ENCODE measurements at regions of chr12 and their contacts with region 1.

Region 1: GRCh38 chr12:53321074-53321814 is at the start of gene AAAS:
- DNase-seq: peak; percentile 98

Region 2: GRCh38 chr12:53180220-53180930 is 140.9 kb before region 1 on chr12 and contains the starts of genes CSAD and ZNF740:
- CTCF ChIA-PET with region 1: interaction called, 4 read pairs
- POLR2A ChIA-PET with region 1: interaction called, 10 read pairs
- DNase-seq: peak; percentile 98

Region 3: DNA sequence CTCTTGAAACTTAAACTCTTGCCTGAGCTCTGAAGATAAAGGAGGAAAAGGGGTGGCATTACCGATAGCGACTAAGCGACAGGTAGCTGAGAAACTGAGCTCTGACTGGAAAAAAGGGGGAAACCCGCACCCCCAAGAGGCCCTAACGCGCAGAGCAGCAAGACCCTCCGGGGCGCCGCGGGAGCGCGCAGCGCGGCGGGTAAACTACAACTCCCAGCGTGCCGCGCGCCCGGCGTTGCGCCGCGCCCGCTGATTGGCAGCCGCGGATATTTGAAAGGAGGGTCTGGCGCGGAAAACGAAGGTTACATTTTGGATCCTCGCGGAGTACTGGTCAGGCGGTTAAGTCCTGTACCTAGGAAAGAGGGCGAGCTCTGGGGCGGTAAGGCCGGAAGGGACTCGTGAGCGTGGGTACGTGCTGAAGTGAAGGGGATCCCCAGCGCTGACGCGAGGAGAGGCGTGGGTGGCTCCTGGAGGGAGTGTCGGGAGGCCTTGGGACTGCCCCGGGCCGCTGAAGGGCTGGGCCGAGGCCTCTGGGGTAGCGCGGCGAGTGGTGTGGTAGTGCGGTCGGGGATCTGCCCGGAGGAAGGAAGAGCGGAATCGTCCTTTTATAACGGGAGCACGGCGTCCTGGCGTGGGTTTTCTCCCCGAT is 53.1 kb before region 1 on chr12 and contains the start of gene ESPL1:
- CTCF ChIA-PET with region 1: interaction called, 6 read pairs
- POLR2A ChIA-PET with region 1: interaction called, 13 read pairs
- DNase-seq: peak; percentile 88

Region 4: GRCh38 chr12:53344824-53345485 is 23.7 kb after region 1 on chr12:
- CTCF ChIA-PET with region 1: interaction called, 48 read pairs
- POLR2A ChIA-PET with region 1: interaction called, 58 read pairs
- DNase-seq: peak; percentile 60

Region 5: DNA sequence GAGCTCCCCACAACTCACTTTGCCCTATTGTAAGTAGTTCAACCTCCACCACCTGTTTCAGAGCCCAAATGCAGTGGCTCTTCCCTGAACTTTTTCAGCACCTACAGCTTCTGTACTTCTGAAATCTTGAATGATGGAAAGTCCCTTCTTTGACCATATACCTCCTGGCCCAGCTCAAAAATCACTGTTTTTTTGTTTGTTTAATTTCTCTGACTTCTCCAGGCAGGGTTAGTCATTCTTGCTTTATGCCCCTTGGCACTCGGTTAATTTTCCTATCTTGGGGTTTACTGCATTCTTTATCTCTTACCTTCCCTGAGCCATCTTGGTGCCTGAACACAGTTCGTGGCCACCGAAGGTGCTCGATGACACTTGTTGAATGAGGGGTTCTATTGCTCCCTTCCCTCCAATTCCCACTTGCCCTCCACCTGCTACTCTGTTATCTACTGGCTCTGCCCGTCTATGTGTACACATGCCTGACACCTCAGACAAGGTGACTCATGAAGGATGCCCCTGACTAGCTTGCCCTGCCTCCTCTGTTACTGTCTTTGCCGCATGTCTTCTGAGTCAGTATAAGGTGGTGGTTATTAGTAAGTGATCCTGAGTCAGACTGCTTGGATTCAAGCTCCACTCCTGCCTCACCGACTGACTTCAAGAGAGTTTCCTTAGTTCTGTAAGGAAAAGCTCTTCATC is 106.8 kb after region 1 on chr12:
- CTCF ChIA-PET with region 1: no interaction called
- POLR2A ChIA-PET with region 1: interaction called, 12 read pairs
- DNase-seq: no peak

Region 6: GRCh38 chr12:53508534-53509199 is 187.4 kb after region 1 on chr12:
- CTCF ChIA-PET with region 1: interaction called, 13 read pairs
- POLR2A ChIA-PET with region 1: interaction called, 4 read pairs
- DNase-seq: peak; percentile 83

Measured in HEK293T (cell line).